ENCODE measurements at regions of chr11 and their contacts with region 1.

Region 1: GRCh38 chr11:76807206-76807875 is 24.2 kb downstream of the TSKU start:
- H3K4me3 Mint-ChIP-seq: no peak overlapping the region
- H3K27ac Mint-ChIP-seq: no peak overlapping the region
- H3K4me1 Mint-ChIP-seq: peaks cover 38% of the 10 kb centered on the region
- H3K27me3 Mint-ChIP-seq: peaks cover 38% of the 10 kb centered on the region

Region 2: GRCh38 chr11:76686261-76687079 is 120.9 kb before region 1 on chr11:
- intact Hi-C with region 1: no loop called
- H3K4me3 Mint-ChIP-seq: peak overlapping the region; percentile 25
- H3K27ac Mint-ChIP-seq: peak overlapping the region; percentile 82
- H3K4me1 Mint-ChIP-seq: peaks cover 98% of the 10 kb centered on the region
- H3K27me3 Mint-ChIP-seq: peaks cover 18% of the 10 kb centered on the region

Region 3: DNA sequence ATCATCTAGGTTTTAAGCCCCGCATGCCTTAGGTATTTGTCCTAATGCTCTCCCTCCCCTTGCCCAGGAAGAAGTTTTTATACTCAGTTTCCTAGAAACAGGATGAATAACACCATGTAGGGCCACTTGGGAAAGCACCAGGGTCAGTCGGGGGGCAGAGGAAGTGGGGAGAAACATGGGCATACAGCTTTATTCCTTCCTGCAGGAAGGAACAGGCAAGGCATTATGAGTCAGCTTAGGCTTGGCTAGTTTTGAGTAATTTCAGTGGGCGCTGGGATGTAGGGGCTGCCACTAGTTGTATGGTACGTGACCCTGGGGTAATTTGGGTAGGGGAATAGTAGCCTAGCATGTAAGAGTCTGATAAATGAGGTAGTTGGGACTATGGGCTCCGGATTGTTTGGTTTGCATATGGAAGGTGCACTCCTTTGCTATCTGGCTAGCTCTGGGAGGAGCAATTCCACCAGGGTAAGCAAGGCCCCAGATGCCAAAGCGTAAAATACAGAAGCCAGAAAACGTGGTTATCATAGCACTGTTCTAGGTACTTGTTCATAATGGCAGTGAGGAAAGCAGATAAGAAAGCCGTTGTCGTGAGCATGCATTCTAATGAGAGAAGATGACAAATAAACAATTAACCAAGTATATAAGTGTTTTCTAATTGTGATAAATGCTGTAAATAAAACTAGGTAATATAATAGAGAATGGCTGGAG is 78.2 kb after region 1 on chr11:
- intact Hi-C with region 1: no loop called
- H3K4me3 Mint-ChIP-seq: no peak overlapping the region
- H3K27ac Mint-ChIP-seq: no peak overlapping the region
- H3K4me1 Mint-ChIP-seq: peaks cover 42% of the 10 kb centered on the region
- H3K27me3 Mint-ChIP-seq: no peaks in the 10 kb centered on the region

Region 4: DNA sequence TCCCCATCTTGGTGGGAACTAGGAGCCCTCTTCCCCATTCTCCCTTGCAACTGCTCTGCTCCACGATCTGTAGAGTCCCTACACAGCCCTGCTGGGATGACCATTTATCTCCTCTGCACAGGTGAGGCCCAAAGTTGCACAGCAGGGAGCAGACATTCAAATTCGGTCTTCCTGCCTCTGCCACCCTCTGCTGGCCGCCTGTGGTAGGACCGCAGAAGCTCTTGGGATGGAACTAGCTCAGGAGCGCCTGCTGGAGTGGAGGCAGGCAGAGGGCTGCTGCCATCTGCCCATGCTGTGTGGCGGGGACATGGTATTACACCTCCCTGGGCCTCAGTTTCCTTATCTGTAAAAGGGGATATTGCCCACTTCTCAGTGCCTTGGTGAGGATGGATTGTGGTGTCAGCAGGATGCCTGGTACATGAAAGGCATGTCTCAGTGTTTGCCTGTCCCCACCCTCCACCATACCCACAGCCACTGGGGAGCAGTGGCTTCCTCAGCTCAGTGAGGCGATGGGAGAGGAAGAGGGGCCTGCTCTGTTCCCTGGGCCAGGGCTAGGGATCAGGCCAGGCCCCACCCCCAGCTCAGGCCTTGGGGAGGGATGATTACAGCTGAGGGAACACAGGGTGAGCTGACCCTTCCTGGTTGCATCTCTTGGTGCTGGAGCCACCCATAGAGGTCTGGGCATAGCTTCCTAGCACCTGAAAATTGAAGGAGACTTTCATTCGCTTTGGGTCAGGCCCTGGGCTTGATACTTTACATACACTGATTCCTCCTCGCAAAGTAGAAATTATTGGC is 284.0 kb after region 1 on chr11:
- intact Hi-C with region 1: loop called (anchors 2 kb)
- H3K4me3 Mint-ChIP-seq: no peak overlapping the region
- H3K27ac Mint-ChIP-seq: no peak overlapping the region
- H3K4me1 Mint-ChIP-seq: no peaks in the 10 kb centered on the region
- H3K27me3 Mint-ChIP-seq: peaks cover 5% of the 10 kb centered on the region